ENCODE measurements at regions of chr12 and their contacts with region 1.

Region 1: DNA sequence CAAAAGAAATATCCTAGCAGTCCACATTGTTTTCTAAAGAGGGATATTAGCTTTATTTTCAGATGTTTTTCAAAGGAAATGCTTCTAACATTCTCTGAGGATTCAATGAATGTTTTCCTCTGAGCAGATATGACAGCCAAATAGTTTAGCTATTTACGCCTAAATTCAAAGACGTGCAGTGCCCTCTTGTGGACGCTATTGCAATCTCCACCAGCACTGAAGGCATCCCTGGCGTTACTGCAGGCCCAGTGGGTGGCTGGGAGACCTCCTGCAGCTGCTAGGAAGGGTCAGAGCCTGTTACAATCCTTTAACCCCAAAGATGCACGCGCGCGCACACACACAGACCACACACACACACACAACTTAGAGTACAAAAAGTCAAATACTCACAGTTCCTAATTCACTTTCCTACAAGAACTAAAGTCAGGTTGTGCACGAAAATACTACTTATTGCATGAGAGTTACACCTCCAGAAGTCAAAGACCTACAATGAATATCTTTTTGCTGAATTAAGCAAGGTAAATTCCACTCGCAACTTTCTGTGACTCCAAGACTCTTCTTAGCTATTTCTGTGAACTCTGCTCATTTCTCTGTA is 589.3 kb upstream of the TMEM132C start:
- DNase-seq: peak; percentile 34
- H3K4me3 ChIP-seq: no peak overlapping the region
- CTCF ChIP-seq: peak; percentile 76

Region 2: DNA sequence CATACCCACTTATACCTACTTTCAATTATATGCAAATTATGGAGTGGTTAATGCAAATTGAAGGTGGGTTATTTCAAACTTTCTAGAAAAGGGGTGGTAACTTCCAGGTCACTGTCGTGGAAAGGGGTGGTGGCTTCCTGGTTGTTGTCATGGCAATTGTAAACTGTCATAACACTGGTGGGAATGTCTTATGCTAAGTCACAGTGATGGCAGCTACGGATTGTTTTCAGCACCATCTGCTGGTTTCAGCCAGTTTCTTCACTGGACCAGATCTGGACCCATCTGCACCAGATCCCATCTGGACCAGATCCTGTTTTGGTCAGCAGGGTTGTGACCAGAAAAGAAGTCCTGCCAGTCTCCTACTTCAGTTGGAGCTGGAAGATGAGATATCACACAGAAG is 1143.1 kb before region 1 on chr12:
- CTCF ChIA-PET with region 1: no interaction called
- POLR2A ChIA-PET with region 1: no interaction called
- DNase-seq: no peak
- H3K4me3 ChIP-seq: no peak overlapping the region
- CTCF ChIP-seq: no peak

Region 3: DNA sequence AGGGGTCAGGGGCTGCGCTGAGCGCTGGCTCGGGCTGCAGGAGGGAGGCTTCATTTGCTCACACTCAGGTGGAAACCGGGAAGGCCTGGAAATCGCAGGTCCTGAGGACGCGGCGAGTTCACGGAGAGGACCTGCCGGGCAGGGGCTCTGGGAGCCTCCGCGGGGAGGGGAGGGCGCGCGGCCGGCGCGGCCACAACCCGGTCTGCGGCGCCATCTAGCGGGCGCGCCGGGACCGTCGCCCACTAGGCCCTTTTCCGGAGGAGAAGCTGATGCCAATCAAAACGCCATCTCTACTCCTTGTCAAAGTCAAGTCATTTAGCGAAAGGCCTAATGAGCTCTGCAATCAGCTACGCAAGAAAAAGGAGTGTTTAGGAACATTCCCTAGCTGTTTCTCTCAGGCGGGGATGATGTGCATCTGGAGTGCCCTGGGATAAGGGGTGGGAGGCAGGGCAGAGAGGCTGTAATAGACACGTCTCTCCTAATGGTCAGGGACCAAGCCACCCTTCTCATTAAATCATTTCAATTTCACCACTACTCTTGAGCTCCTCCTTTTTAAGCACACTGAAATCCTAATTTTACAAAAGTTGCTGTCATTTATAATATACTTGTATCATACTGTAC is 296.5 kb before region 1 on chr12:
- CTCF ChIA-PET with region 1: interaction called, 26 read pairs
- POLR2A ChIA-PET with region 1: no interaction called
- DNase-seq: no peak
- H3K4me3 ChIP-seq: peak overlapping the region; percentile 58
- CTCF ChIP-seq: peak; percentile 79

Region 4: GRCh38 chr12:127485528-127485927 is 192.1 kb before region 1 on chr12:
- CTCF ChIA-PET with region 1: interaction called, 123 read pairs
- POLR2A ChIA-PET with region 1: no interaction called
- DNase-seq: peak; percentile 77
- H3K4me3 ChIP-seq: no peak overlapping the region
- CTCF ChIP-seq: peak; percentile 60

Region 5: GRCh38 chr12:127559349-127560040 is 118.1 kb before region 1 on chr12:
- CTCF ChIA-PET with region 1: interaction called, 20 read pairs
- POLR2A ChIA-PET with region 1: no interaction called
- DNase-seq: peak; percentile 92
- H3K4me3 ChIP-seq: no peak overlapping the region
- CTCF ChIP-seq: peak; percentile 80

Region 6: DNA sequence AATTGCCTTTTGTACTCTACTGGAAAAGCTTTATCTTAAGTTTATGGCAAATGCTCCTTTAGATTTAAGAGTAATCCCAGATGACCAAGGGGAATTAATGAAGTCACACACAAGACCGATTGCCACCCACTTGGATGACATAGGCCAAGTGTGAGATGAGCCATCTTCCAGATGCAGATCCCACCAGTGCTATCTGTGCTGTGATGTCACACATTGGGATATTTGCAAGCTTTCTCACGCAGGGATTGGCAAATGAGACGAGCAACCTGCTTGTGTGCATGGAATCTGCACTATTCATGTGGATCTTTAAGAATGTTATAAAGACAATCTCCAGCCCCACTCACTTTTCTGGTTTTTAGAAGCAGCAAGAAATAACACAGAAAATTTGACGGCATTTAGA is 12.7 kb before region 1 on chr12:
- CTCF ChIA-PET with region 1: interaction called, 75 read pairs
- POLR2A ChIA-PET with region 1: interaction called, 5 read pairs
- DNase-seq: no peak
- H3K4me3 ChIP-seq: no peak overlapping the region
- CTCF ChIP-seq: no peak

Region 7: DNA sequence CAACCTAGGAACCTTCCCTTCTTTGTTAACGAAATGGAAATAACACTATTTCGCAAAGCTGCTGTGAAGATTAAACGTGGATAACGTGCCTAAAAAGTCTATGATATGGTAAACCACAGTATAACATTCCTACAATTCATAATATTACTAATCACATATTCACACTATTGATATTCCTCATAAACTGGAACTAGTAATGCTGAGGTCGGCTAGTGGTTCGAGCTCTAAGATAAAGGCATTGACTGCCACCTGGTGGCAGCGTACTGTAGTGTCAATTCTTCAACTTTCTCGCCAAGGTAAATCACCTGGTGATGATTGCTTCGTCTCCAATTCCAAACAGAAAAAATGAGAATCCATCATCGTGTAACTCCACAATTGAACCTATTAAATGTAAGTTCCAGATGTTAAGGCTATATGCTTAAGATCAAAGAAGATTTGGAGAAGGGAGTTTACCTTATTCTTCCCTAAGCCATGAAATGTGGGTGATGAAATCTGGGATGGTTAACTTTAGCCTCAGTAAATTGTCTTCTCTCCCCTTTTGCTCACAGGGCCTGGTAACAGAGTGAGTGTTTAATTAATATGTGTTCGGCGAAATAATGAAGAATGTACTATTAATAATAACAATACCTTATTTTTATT is 391.8 kb after region 1 on chr12:
- CTCF ChIA-PET with region 1: interaction called, 40 read pairs
- POLR2A ChIA-PET with region 1: no interaction called
- DNase-seq: peak; percentile 46
- H3K4me3 ChIP-seq: no peak overlapping the region
- CTCF ChIP-seq: peak; percentile 66

Measured in AG04449 (cell line).